SK-N-SH (cell line): ENCODE measurements at regions of chr1 and their contacts with region 1.

Region 1: DNA sequence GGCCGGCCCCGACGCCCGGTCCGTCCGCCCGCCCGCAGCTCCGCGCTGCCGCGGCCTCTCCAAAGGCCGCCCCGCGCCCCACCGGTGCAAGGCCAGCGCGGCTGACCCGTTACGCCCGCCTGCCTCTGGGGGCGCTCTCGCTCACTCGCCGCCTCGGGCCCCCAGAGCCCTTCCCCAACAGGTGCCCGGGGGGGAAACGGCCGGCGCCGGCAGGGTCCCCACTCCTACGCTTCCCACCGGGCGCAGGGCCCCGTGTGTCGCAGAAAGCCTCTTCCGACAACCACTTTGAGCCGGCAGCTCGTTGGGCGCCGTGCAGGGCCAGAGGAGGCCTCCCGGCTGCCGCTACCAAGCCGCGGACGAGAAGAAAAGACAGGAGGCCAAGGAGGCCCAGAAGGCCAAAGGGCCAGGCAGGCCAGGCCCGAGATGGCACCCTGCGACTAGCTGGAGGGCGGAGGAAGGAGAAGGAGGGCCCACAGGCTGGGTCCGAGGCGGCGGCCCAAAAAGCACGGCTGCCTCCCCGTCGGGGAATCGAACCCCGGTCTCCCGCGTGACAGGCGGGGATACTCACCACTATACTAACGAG is 64.9 kb upstream of the FCGR2A start:
- DNase-seq: peak; percentile 92
- H3K4me3 ChIP-seq: peak overlapping the region; percentile 72 to 76
- H3K27ac ChIP-seq: no peak overlapping the region; a peak in 1 of 4 replicates
- H3K4me1 ChIP-seq: peaks cover 0 to 7% of the 10 kb centered on the region in 2 experiments; a peak in 1 of 4 replicates
- H3K27me3 ChIP-seq: peaks cover 18% of the 10 kb centered on the region
- CTCF ChIP-seq: peak; percentile 66
- EP300 ChIP-seq: no peak
- RAD21 ChIP-seq: no peak

Region 2: DNA sequence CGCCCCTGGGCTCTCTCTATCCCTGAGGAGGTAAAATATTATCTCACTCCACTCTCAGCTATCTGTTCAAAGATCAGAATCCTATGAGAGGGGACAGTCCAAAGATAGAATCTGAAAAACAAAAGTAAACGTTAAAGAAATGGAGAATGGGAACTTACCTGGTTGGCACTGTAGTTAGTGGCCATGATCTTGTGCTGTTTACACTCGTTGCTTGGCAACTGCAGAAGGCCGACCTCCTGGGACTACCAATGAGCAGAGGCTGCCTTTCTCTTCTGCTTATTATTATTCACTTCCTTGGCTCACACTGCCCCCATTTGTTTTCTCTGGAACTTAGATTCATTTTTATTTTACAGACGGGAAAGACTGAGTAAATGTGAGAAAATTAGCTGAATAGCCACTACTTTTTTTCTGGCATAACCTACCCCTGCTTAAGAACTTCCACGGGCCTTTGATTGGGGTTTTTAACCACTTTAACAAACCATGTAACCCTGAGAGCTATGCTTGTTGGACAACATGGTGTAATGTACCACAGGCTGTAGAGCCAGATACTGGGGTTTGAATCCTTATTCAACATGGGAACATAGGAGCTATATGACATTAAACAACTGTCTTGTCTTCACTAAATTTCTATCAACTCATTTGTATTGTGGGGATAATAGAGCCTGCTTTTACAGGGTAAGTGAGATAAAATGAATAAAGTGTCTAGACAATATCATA is 72.6 kb before region 1 on chr1 and contains the start of gene CFAP126:
- CTCF ChIA-PET with region 1: no interaction called
- POLR2A ChIA-PET with region 1: no interaction called
- DNase-seq: peak; percentile 57
- H3K4me3 ChIP-seq: no peak within 1 kb of the TSS
- H3K27ac ChIP-seq: peak within 1 kb of the TSS in 1 of 2 experiments; percentile 53; a peak in 2 of 4 replicates
- H3K4me1 ChIP-seq: 0 out of 4 replicates have a peak, but pooled peaks cover 0 to 2% of the 10 kb centered on the region in 2 experiments
- H3K27me3 ChIP-seq: no peaks in the 10 kb centered on the region
- CTCF ChIP-seq: peak; percentile 41
- EP300 ChIP-seq: no peak
- RAD21 ChIP-seq: peak; percentile 50
- polyA plus RNA-seq, gene CFAP126: not detected in 2 replicates

Region 3: DNA sequence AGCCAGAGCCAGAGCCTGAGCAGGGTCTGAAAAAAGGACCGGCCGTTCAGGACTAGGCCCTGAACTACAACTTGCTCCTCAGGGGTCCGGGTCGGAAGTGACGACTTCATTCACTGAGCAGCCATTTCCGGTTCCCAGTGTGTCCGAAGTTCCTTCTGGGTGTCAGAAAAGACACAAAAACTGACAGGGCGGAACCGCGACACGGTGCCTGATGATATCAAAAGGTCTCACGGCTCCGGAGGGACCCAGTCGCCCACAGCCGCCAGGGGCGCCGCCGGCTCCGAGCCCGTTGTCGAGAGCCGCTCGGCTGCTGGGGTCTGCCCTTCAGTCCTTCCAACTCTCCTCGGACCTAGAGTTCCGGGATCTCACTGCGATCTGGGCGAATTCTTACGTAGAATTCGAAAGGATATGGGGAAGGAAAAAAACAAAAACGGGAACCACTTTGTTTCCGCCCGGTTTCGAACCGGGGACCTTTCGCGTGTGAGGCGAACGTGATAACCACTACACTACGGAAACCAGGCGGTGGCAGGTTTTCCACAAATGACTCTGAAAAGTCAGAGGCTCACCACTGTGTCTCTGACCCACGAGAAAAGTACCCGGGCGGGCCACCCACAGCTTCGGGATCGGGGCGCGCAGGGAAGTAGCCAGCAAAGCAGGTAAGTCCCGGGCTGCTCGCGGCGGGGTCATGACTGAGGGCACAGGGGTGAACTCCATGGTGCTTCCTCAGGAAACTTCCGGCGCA is 41.0 kb before region 1 on chr1:
- CTCF ChIA-PET with region 1: interaction called, 16 read pairs
- POLR2A ChIA-PET with region 1: no interaction called
- DNase-seq: peak; percentile 86
- H3K4me3 ChIP-seq: peak overlapping the region; percentile 76 to 89
- H3K27ac ChIP-seq: peak overlapping the region; percentile 98 to 100
- H3K4me1 ChIP-seq: peaks cover 2 to 6% of the 10 kb centered on the region in 2 experiments; a peak in 2 of 4 replicates
- H3K27me3 ChIP-seq: no peaks in the 10 kb centered on the region
- CTCF ChIP-seq: peak; percentile 55
- EP300 ChIP-seq: peak in 1 of 2 experiments; percentile 14; a peak in 1 of 4 replicates
- RAD21 ChIP-seq: no peak

Region 4: GRCh38 chr1:161427733-161428516 is 12.5 kb before region 1 on chr1:
- CTCF ChIA-PET with region 1: interaction called, 18 read pairs
- POLR2A ChIA-PET with region 1: no interaction called
- DNase-seq: peak; percentile 36
- H3K4me3 ChIP-seq: peak overlapping the region; percentile 41 to 45
- H3K27ac ChIP-seq: no peak overlapping the region
- H3K4me1 ChIP-seq: peaks cover 0 to 7% of the 10 kb centered on the region in 2 experiments; a peak in 2 of 4 replicates
- H3K27me3 ChIP-seq: peaks cover 9% of the 10 kb centered on the region; the same call in 1 of the 2 replicates
- CTCF ChIP-seq: no peak
- EP300 ChIP-seq: no peak
- RAD21 ChIP-seq: no peak

Region 5: GRCh38 chr1:161473363-161473762 is 33.0 kb after region 1 on chr1:
- CTCF ChIA-PET with region 1: no interaction called
- POLR2A ChIA-PET with region 1: no interaction called
- DNase-seq: no peak
- H3K4me3 ChIP-seq: peak overlapping the region; percentile 45 to 53
- H3K27ac ChIP-seq: no peak overlapping the region
- H3K4me1 ChIP-seq: no peaks in the 10 kb centered on the region; a peak in 1 of 4 replicates
- H3K27me3 ChIP-seq: peaks cover 40% of the 10 kb centered on the region
- CTCF ChIP-seq: no peak
- EP300 ChIP-seq: no peak
- RAD21 ChIP-seq: no peak